Activated CD4-positive, alpha-beta memory T cell treated with anti-CD3 and anti-CD28 coated beads, Interleukin-2, amount 10 ng/mL, durations not matched to agents 7 days and 5 days (primary cell): ENCODE measurements at regions of chr1 and their contacts with region 1.

Region 1: GRCh38 chr1:110787328-110788071 is 85.4 kb upstream of the CD53 start:
- DNase-seq: peak; percentile 73
- H3K4me3 Mint-ChIP-seq: peak overlapping the region; percentile 57
- H3K27ac Mint-ChIP-seq: peak overlapping the region; percentile 93
- H3K4me1 Mint-ChIP-seq: peaks cover 62% of the 10 kb centered on the region
- H3K27me3 Mint-ChIP-seq: peaks cover 3% of the 10 kb centered on the region

Region 2: GRCh38 chr1:110645821-110646735 is 141.4 kb before region 1 on chr1:
- CTCF ChIA-PET with region 1: interaction called, 5 read pairs
- POLR2A ChIA-PET with region 1: interaction called, 15 read pairs
- DNase-seq: no peak
- H3K4me3 Mint-ChIP-seq: peak overlapping the region; percentile 1
- H3K27ac Mint-ChIP-seq: no peak overlapping the region
- H3K4me1 Mint-ChIP-seq: peaks cover 47% of the 10 kb centered on the region
- H3K27me3 Mint-ChIP-seq: no peaks in the 10 kb centered on the region

Region 3: GRCh38 chr1:110746579-110747160 is 40.8 kb before region 1 on chr1:
- CTCF ChIA-PET with region 1: no interaction called
- POLR2A ChIA-PET with region 1: no interaction called
- DNase-seq: peak; percentile 68
- H3K4me3 Mint-ChIP-seq: no peak overlapping the region
- H3K27ac Mint-ChIP-seq: no peak overlapping the region
- H3K4me1 Mint-ChIP-seq: no peaks in the 10 kb centered on the region
- H3K27me3 Mint-ChIP-seq: peaks cover 36% of the 10 kb centered on the region

Region 4: DNA sequence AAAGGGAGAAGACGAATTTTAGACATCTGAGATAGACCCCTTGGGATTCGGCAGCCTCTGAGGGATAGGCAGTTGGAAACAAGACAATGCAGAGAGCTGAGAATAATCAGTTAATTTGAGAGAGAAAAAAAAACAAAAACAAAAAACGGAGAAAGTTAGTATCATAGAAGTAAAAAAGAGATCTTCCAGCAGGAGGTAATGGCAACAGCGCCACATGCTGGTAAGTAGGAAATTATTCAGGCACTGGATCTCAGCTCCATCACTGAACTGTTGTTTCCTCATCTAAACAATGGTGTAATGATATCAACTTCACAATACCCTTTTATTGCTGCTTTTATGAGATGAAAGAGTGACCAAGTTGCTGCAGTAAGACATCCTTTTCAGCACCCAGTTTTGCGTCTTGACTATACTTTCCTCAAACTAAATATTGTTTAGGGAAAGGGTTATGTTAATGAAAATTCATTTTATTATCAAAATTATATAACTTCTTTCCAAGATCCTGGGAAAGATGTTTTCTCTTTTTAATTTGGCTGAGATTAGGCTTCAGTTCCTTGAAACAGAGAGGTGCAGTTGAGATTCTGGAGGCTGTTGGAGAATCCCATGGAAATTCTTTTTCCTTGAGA is 21.4 kb before region 1 on chr1:
- CTCF ChIA-PET with region 1: interaction called, 33 read pairs
- POLR2A ChIA-PET with region 1: interaction called, 3 read pairs
- DNase-seq: peak; percentile 66
- H3K4me3 Mint-ChIP-seq: no peak overlapping the region
- H3K27ac Mint-ChIP-seq: no peak overlapping the region
- H3K4me1 Mint-ChIP-seq: peaks cover 9% of the 10 kb centered on the region
- H3K27me3 Mint-ChIP-seq: peaks cover 19% of the 10 kb centered on the region

Region 5: GRCh38 chr1:110879758-110880606 is 92.5 kb after region 1 on chr1:
- CTCF ChIA-PET with region 1: interaction called, 15 read pairs
- POLR2A ChIA-PET with region 1: interaction called, 170 read pairs
- DNase-seq: peak; percentile 82
- H3K4me3 Mint-ChIP-seq: peak overlapping the region; percentile 97
- H3K27ac Mint-ChIP-seq: peak overlapping the region; percentile 100
- H3K4me1 Mint-ChIP-seq: peaks cover 63% of the 10 kb centered on the region
- H3K27me3 Mint-ChIP-seq: no peaks in the 10 kb centered on the region